Right ventricle myocardium superior (tissue), 1 donor: ENCODE measurements at regions of chr7 and their contacts with region 1.

Region 1: GRCh38 chr7:130896898-130897514 is 163.0 kb upstream of the KLF14 start:
- DNase-seq: peak; percentile 79
- ATAC-seq: peak; percentile 71

Region 2: GRCh38 chr7:131039355-131039762 is 142.4 kb after region 1 on chr7:
- intact Hi-C with region 1: loop called (anchors 5 kb)
- DNase-seq: no peak
- ATAC-seq: no peak